K562 (cell line): ENCODE measurements at regions of chr18 and their contacts with region 1.

Region 1: GRCh38 chr18:70205421-70206397 is at the start of gene RTTN:
- DNase-seq: peak; percentile 62 to 91 (median 75)
- ATAC-seq: peak; percentile 99
- H3K4me3 ChIP-seq: peak within 1 kb of the TSS; percentile 61
- H3K27ac ChIP-seq: peak within 1 kb of the TSS; percentile 97
- H3K4me1 ChIP-seq: no peaks in the 10 kb centered on the region
- H3K27me3 ChIP-seq: no peaks in the 10 kb centered on the region
- CTCF ChIP-seq: no peak
- EP300 ChIP-seq: no peak
- POLR2A ChIP-seq: peak; percentile 75
- RAD21 ChIP-seq: no peak; a peak in 1 of 4 replicates
- polyA plus RNA-seq, gene RTTN: 3.1 to 4.9 TPM

Region 2: DNA sequence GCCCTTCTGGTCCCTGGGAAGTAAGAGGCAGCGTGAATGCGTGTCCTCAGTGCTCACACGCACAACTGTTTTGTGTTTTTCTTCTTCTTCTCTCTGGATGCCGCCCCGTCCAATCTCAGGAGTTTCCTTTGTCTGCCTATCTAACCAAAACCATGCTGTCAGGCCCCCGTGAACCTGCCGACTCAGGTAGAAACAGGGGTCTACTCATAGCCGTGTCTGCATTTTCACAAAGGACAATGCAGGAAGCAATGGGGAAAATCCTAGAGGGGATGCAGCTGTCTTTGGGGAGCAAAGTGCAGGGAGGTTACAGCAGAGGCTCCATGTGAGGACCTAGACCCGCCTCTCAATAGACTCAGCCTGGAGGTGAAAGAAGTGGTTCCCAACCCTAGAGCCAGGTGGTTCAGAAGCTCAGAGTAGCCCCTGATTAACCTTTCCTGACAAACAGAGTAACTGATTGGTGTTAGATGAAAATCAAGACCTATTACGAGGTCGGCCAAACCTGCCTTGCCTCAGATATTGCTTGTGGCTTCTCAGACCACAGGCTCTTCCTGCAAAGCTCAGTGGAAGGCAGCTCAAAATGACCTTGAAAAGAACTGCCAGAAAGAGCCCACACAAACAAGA is 307.4 kb before region 1 on chr18:
- CTCF ChIA-PET with region 1: no interaction called
- POLR2A ChIA-PET with region 1: no interaction called
- in situ Hi-C with region 1: no loop called
- intact Hi-C with region 1: no loop called
- DNase-seq: no peak
- ATAC-seq: no peak
- H3K4me3 ChIP-seq: no peak overlapping the region
- H3K27ac ChIP-seq: no peak overlapping the region
- H3K4me1 ChIP-seq: no peaks in the 10 kb centered on the region
- H3K27me3 ChIP-seq: no peaks in the 10 kb centered on the region
- CTCF ChIP-seq: no peak
- EP300 ChIP-seq: no peak
- POLR2A ChIP-seq: no peak
- RAD21 ChIP-seq: no peak

Region 3: GRCh38 chr18:70296289-70296688 is 90.6 kb after region 1 on chr18:
- CTCF ChIA-PET with region 1: no interaction called
- POLR2A ChIA-PET with region 1: no interaction called
- in situ Hi-C with region 1: no loop called
- intact Hi-C with region 1: loop called (anchors 5 kb)
- DNase-seq: peak; percentile 10 to 75 (median 37)
- ATAC-seq: peak; percentile 91
- H3K4me3 ChIP-seq: peak overlapping the region; percentile 19; the same call in 1 of the 2 replicates
- H3K27ac ChIP-seq: peak overlapping the region; percentile 65
- H3K4me1 ChIP-seq: peaks cover 7 to 20% of the 10 kb centered on the region in 2 experiments; a peak in 4 of 5 replicates
- H3K27me3 ChIP-seq: no peaks in the 10 kb centered on the region
- CTCF ChIP-seq: no peak
- EP300 ChIP-seq: no peak
- POLR2A ChIP-seq: no peak
- RAD21 ChIP-seq: no peak; a peak in 1 of 4 replicates